Motor neuron (in vitro differentiated cells): ENCODE measurements at regions of chr3 and their contacts with region 1.

Region 1: GRCh38 chr3:168213920-168214319 is 118.2 kb upstream of the GOLIM4 start:
- ATAC-seq: no peak
- H3K4me3 ChIP-seq: no peak overlapping the region
- H3K27ac ChIP-seq: no peak overlapping the region
- H3K4me1 ChIP-seq: peaks cover 4 to 10% of the 10 kb centered on the region in 2 donors

Region 2: GRCh38 chr3:168002786-168003368 is 211.0 kb before region 1 on chr3:
- in situ Hi-C with region 1: no loop called
- ATAC-seq: peak in 1 of 8 experiments; percentile 38
- H3K4me3 ChIP-seq: no peak overlapping the region
- H3K27ac ChIP-seq: no peak overlapping the region
- H3K4me1 ChIP-seq: no peaks in the 10 kb centered on the region

Region 3: DNA sequence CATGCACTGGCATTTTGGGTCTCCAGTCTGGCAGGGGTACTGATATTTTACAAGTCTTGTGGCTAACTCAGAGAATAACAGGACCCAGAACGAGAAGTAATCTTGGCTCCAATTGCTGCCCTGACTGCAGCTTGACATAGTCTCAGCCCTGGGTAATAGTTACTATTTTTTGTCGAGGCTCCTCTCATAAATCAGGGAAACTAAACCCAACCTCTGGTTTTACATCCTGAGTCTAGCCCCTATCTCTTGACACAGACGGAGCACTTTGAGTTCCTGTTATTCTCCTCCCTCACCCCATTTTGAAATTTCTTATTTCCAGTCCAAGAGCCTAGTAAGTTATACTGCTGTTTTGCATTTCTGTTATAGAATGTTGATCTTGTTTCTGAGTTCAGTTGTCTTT is 157.9 kb after region 1 on chr3:
- in situ Hi-C with region 1: no loop called
- ATAC-seq: no peak
- H3K4me3 ChIP-seq: no peak overlapping the region
- H3K27ac ChIP-seq: no peak overlapping the region
- H3K4me1 ChIP-seq: no peaks in the 10 kb centered on the region

Region 4: GRCh38 chr3:168405288-168405687 is 191.4 kb after region 1 on chr3:
- in situ Hi-C with region 1: no loop called
- ATAC-seq: no peak
- H3K4me3 ChIP-seq: no peak overlapping the region
- H3K27ac ChIP-seq: no peak overlapping the region
- H3K4me1 ChIP-seq: no peaks in the 10 kb centered on the region

Region 5: DNA sequence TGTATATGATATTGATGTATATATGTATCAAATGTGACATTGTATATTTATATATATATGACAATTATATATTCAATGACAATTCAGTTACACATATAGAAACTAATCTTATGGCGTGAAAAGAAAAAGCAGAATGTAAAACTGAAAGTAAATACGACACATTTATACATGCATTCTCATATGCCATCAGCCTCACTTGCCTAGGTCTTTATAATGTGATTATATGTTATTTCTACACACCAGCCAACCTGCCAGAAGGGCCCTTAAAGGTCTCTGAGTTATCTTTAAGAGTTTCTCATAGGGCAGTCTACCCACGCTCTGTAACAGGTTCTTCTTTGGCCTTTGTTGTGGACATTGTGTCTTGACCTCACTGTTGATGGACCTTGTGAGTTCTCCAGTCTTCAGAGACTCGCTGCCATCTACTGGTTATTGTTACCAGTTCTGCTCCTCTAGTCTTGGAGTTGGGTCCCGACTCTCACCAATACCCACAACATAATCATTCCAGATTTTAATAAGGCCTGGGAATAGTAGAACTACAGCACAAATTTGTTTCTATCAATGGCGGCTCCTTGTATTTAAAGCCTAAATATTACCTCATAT is 253.3 kb after region 1 on chr3:
- in situ Hi-C with region 1: loop called in 3 of 9 experiments (anchors 25 kb)
- ATAC-seq: peak in 4 of 8 experiments; percentile 62 to 95 (median 92)
- H3K4me3 ChIP-seq: no peak overlapping the region
- H3K27ac ChIP-seq: no peak overlapping the region
- H3K4me1 ChIP-seq: peaks cover 0 to 12% of the 10 kb centered on the region in 2 donors

Region 6: GRCh38 chr3:168620826-168621225 is 406.9 kb after region 1 on chr3:
- in situ Hi-C with region 1: loop called in 1 of 9 experiments (anchors 25 kb)
- ATAC-seq: peak in 7 of 8 experiments; percentile 45 to 79 (median 60)
- H3K4me3 ChIP-seq: no peak overlapping the region
- H3K27ac ChIP-seq: no peak overlapping the region
- H3K4me1 ChIP-seq: peaks cover 30 to 42% of the 10 kb centered on the region in 2 donors

Region 7: GRCh38 chr3:168847291-168847883 is 633.5 kb after region 1 on chr3:
- in situ Hi-C with region 1: loop called (anchors 10 to 25 kb)
- ATAC-seq: peak in 6 of 8 experiments; percentile 40 to 70 (median 55)
- H3K4me3 ChIP-seq: no peak overlapping the region
- H3K27ac ChIP-seq: no peak overlapping the region
- H3K4me1 ChIP-seq: peaks cover 5 to 11% of the 10 kb centered on the region in 2 donors

Region 8: DNA sequence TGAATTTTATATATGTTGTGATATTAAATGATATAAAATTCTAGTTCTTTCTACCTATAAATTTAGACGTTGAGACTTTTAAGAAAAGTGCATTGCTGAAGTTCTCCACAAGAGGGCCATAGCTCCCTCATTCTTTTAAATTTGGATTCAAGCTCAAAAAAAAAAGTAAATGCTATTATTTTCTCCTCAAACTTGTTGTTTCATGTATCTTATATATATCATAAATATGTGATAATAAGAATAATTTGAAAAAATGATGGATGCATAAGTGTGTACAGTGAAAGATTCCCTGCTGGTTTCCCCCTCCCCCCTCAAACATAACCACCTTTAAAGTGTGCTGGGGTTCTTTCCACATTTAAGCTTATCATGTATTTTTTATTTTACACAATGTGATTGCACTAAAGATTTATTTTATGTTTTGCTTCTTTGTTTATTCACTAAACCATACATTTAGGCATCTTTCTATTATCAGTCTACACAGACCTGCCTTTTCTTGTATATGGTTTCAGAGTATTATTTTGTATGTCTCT is 651.2 kb after region 1 on chr3:
- in situ Hi-C with region 1: loop called in 3 of 9 experiments (anchors 25 kb)
- ATAC-seq: no peak
- H3K4me3 ChIP-seq: no peak overlapping the region
- H3K27ac ChIP-seq: no peak overlapping the region
- H3K4me1 ChIP-seq: no peaks in the 10 kb centered on the region

Region 9: GRCh38 chr3:169668957-169669681 is 1455.2 kb after region 1 on chr3:
- in situ Hi-C with region 1: loop called in 1 of 9 experiments (anchors 25 kb)
- ATAC-seq: peak; percentile 95 to 99 (median 98)
- H3K4me3 ChIP-seq: peak overlapping the region; percentile 36 to 48 (median 39)
- H3K27ac ChIP-seq: no peak overlapping the region
- H3K4me1 ChIP-seq: peaks cover 14 to 15% of the 10 kb centered on the region in 2 donors